Endothelial cell of umbilical vein (primary cell): ENCODE measurements at regions of chr2 and their contacts with region 1.

Region 1: DNA sequence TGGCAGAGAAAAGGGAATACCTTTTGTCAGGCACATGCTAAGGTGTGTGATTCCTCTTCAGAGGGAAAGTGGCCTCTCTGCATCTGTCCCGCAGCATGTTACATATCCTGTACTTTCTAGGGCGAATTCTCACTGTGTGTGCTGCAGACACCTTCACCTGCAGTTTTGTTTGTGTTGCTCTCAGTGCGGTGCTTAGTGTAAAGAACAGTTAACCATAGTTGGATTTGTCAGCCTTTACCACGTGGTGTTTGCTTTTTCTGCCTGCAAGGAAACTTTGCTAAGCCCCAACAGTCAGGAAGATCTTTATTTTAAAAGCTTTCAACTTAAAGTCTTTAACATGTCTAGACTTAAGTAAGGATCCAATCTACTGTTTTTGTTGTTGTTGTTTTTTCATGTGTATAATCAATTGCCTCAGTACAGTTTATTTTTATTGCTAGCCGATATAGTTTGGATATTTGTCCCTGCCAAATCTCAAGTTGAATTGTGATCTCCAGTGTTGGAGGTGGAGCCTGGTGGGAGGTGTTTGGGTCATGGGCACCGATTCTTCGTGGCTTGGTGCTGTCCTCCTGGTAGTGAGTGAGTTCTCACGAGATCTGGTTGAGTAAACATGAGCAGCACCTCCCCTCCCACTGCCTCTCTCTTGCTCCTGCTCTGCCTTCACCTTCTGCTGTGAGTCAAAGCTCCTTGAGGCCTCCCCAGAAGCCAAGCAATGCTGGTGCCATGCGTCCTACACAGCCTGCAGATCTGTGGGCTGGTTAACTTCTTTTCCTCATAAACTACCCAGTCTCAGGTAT is 90.6 kb downstream of the SNTG2 start:
- DNase-seq: no peak
- H3K4me3 ChIP-seq: no peak overlapping the region
- H3K27ac ChIP-seq: no peak overlapping the region
- H3K4me1 ChIP-seq: no peaks in the 10 kb centered on the region
- H3K27me3 ChIP-seq: no peaks in the 10 kb centered on the region
- CTCF ChIP-seq: no peak
- POLR2A ChIP-seq: no peak

Region 2: GRCh38 chr2:1891147-1891546 is 849.9 kb after region 1 on chr2:
- CTCF ChIA-PET with region 1: no interaction called
- POLR2A ChIA-PET with region 1: no interaction called
- dilution Hi-C with region 1: no loop called
- intact Hi-C with region 1: loop called (anchors 5 kb)
- DNase-seq: no peak
- H3K4me3 ChIP-seq: no peak overlapping the region
- H3K27ac ChIP-seq: no peak overlapping the region
- H3K4me1 ChIP-seq: no peaks in the 10 kb centered on the region
- H3K27me3 ChIP-seq: no peaks in the 10 kb centered on the region
- CTCF ChIP-seq: no peak
- POLR2A ChIP-seq: no peak